AG04449 (cell line): ENCODE measurements at regions of chr17 and their contacts with region 1.

Region 1: GRCh38 chr17:82752371-82753200 is 721 bp downstream of the TBCD start:
- DNase-seq: no peak
- H3K4me3 ChIP-seq: peak overlapping the region; percentile 80
- CTCF ChIP-seq: no peak

Region 2: GRCh38 chr17:82518826-82519810 is 233.5 kb before region 1 on chr17 and contains the start of gene FOXK2:
- CTCF ChIA-PET with region 1: no interaction called
- POLR2A ChIA-PET with region 1: no interaction called
- DNase-seq: peak; percentile 71
- H3K4me3 ChIP-seq: peak within 1 kb of the TSS; percentile 70
- CTCF ChIP-seq: no peak

Region 3: GRCh38 chr17:82775001-82775823 is 22.6 kb after region 1 on chr17:
- CTCF ChIA-PET with region 1: interaction called, 21 read pairs
- POLR2A ChIA-PET with region 1: no interaction called
- DNase-seq: no peak
- H3K4me3 ChIP-seq: no peak overlapping the region
- CTCF ChIP-seq: peak; percentile 93

Region 4: DNA sequence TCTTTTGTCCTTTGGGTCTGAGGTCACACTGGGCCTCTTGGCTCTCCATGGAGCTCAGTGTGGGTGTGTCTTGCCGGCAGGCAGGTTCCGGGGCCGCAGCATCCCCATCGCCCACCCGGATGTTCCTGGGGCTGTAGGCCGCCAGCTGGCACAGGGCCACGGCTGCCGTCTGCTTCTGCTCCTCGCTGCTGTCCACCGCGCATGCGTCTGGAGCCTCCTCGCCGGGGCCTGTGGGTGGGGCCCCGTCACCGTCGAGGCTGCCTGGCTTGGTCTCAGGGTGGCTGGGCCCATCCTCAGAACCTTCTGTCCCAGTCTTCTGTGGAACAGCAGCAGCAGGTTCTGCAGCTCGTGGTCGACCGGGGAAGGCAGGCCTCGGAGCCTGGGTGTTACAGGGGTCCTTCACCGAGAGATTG is 77.7 kb after region 1 on chr17:
- CTCF ChIA-PET with region 1: no interaction called
- POLR2A ChIA-PET with region 1: no interaction called
- DNase-seq: no peak
- H3K4me3 ChIP-seq: no peak overlapping the region
- CTCF ChIP-seq: no peak